Right ventricle myocardium inferior (tissue), 1 donor: ENCODE measurements at regions of chr3 and their contacts with region 1.

Region 1: DNA sequence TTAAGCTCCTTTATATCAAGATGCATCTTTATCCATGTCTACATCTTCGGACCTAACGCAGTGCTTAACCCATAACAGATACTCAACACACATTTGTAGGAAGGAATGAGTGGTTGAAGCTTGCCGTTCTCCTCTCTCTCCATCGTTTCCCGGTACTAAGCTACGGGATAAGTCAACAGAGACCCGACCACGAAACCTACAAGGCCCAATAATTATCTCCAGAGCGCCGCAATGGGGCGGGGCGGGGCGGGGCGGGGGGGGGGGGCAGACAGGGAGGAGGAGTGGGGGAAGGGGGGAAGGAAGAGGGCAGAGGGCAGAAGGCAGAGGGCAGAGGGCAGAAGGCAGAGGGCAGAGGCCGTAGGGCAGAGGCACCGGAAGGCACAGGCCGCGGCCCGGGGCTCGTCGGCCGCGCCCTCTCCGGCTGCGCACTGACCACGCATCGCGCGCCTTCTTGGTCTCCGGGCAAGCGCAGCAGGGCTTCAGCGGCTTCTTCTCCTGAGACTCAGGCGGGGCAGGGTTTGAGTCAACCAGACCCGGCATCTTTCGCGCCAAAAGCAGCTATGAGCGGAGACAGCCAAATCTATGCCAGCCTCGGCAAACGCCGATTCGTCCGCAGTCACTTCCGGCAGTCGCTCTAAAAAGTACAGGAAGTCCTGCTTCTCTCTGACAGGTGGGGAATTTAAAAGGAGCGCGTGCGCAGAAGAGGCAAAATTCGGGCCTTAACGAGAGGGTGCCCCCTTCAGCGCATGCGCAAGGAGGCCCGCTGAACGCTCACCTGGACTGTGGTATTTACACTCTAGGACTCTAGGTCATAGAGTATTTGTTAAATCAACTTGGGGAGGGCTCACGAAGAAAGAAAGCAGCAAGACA is at the start of gene COX17:
- DNase-seq: peak; percentile 94
- ATAC-seq: peak; percentile 90
- total RNA-seq, gene COX17: 167 TPM

Region 2: DNA sequence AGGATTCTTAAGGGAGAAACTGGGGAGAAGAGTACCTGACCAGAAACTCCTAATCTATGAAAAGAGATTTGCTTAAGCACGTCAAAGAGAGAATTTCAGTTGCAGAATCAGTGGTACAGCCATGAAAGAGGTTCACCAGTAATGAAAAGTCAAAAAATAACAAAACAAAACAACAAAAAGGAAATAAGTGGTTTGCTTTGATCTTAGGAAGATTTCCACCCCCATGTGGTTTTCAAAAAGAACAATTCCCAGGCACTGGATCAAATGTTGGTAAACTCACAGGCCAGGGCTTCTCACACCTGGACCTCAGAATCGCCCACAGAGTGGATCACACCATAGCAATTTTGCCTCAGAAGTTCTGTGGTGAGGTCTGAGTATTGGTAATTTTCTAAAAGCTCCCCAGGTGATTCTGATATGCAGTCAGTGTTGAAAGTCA is 281.1 kb before region 1 on chr3:
- intact Hi-C with region 1: loop called (anchors 10 kb)
- DNase-seq: no peak
- ATAC-seq: no peak

Region 3: DNA sequence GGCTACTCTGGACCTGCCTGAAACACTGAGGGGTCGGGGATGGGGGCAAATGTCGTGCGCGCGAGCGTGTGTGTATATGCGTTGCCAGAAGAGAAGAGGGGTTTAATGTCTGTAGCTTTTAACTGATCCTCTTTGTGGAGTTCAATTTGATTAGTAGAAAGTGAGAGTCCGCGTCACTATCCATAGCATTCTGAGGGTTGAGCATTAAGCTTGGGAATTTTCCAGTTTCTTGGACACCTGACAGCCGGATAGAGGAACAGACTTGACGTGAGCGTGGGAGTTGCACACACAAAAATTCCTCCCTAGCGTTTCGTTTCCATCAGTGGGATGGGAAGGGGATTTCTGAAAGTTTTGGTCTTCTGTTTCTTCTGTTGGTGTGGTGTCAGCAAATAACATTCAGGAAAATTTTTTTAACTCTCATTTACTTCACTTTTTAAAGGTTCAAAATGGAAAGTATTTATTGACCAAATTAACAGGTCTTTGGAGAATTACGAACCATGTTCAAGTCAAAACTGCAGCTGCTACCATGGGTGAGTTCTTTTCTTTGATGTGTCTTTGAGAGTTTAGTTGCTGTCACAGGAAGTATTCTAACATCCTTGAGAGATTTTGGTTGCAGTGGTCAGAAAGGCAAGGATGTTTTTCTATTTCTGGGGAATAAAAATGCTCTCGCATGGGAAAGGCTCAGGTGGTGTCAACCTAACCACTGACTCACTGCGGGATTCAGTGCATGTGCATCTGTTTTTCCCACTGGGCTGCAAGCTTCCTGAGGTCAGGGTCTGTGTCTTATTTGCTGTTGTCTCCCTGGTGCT is 207.4 kb before region 1 on chr3:
- intact Hi-C with region 1: loop called (anchors 2 kb)
- DNase-seq: peak; percentile 76
- ATAC-seq: no peak

Region 4: GRCh38 chr3:119550192-119550910 is 126.7 kb before region 1 on chr3:
- intact Hi-C with region 1: loop called (anchors 5 kb)
- DNase-seq: no peak
- ATAC-seq: peak; percentile 58

Region 5: DNA sequence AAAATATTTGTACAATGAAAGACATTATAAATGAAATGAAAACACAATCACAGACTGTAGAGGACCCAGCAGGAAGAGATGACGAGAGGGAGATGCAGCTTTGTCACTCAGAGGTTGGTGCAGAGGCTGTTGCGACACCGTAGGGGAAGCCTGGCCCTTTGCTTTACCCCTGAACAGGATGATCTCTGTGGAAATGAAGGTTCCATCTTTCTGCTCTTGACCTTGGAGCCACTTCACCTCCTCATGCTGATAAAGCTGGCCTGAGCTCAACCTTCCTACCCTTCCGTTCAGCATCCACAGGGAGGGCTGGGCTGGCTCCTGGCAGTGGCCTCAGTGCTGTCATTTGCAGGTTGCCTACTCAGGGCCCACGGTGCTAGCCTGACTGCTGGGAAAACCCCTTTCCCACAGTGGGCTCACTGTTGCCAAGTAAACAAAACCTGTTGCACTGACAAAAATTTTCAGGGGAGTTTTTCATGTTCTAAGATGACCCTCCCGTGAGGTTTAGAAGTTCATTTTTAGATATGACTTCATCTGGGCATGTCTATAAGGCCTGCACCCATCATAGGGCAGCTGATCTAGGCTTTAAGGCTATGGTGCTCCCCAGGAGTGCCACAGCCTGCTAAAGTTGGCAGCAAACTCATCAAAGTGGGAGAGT is 114.6 kb before region 1 on chr3:
- intact Hi-C with region 1: no loop called
- DNase-seq: no peak
- ATAC-seq: peak; percentile 42

Region 6: GRCh38 chr3:119600732-119601131 is 76.3 kb before region 1 on chr3:
- intact Hi-C with region 1: loop called (anchors 5 kb)
- DNase-seq: no peak
- ATAC-seq: peak; percentile 62

Region 7: GRCh38 chr3:119660474-119661440 is 16.2 kb before region 1 on chr3 and contains the start of gene POPDC2:
- intact Hi-C with region 1: loop called (anchors 2 kb)
- DNase-seq: no peak
- ATAC-seq: peak; percentile 86
- total RNA-seq, gene POPDC2: 605 TPM

Region 8: GRCh38 chr3:119902061-119902460 is 225.1 kb after region 1 on chr3:
- intact Hi-C with region 1: no loop called
- DNase-seq: no peak
- ATAC-seq: no peak